Mammary epithelial cell (primary cell): ENCODE measurements at regions of chr5 and their contacts with region 1.

Region 1: GRCh38 chr5:121968910-121969607 is 7.3 kb downstream of the SRFBP1 start:
- DNase-seq: peak; percentile 98
- H3K4me3 ChIP-seq: peak overlapping the region in 1 of 3 experiments; percentile 25
- H3K27ac ChIP-seq: peak overlapping the region; percentile 87
- H3K4me1 ChIP-seq: peaks cover 29% of the 10 kb centered on the region
- H3K27me3 ChIP-seq: no peaks in the 10 kb centered on the region
- CTCF ChIP-seq: no peak

Region 2: GRCh38 chr5:122053181-122054109 is 84.4 kb after region 1 on chr5:
- CTCF ChIA-PET with region 1: no interaction called
- dilution Hi-C with region 1: loop called (anchors 5 kb)
- in situ Hi-C with region 1: no loop called
- intact Hi-C with region 1: no loop called
- DNase-seq: no peak
- H3K4me3 ChIP-seq: no peak overlapping the region
- H3K27ac ChIP-seq: no peak overlapping the region
- H3K4me1 ChIP-seq: no peaks in the 10 kb centered on the region
- H3K27me3 ChIP-seq: no peaks in the 10 kb centered on the region
- CTCF ChIP-seq: no peak

Region 3: DNA sequence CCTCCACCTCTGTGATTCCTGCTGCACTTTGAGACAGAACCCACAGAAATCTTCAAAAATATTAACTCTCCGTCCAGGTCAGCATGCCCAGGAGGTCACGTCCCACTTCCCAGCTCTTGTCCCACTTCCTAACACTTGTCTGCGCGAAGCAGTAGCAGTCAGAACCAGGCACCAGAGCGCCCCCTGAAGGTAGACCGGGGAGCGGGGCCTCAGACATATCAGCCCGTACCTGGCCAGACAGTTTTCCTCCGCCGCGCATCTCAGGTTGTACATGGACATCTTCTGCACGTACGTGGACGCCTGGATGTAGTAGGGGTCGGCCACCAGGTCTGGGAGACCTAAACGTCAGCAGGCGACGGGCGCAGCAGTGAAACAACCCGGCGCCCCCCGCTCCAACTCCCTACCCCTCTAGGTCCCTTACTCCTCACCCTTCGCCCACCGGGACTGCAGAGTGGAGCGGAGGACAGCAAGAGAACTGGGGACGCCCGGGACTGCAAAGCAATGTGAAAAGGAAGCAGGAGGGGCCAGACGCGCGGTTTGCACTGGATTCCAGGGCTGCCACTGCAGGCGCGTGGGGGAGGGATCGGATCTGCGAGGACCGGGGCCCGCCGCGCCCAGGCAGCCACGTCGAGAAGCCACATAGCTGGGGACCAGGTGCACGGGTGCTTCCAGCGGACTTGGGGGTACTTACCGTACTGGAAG is 107.8 kb after region 1 on chr5:
- CTCF ChIA-PET with region 1: interaction called, 8 read pairs
- dilution Hi-C with region 1: no loop called
- in situ Hi-C with region 1: loop called in 1 of 2 experiments (anchors 25 kb)
- intact Hi-C with region 1: loop called (anchors 1 kb)
- DNase-seq: peak; percentile 75
- H3K4me3 ChIP-seq: peak overlapping the region; percentile 41 to 73 (median 69)
- H3K27ac ChIP-seq: peak overlapping the region; percentile 53
- H3K4me1 ChIP-seq: peaks cover 30% of the 10 kb centered on the region
- H3K27me3 ChIP-seq: no peaks in the 10 kb centered on the region
- CTCF ChIP-seq: peak; percentile 84 to 95

Region 4: DNA sequence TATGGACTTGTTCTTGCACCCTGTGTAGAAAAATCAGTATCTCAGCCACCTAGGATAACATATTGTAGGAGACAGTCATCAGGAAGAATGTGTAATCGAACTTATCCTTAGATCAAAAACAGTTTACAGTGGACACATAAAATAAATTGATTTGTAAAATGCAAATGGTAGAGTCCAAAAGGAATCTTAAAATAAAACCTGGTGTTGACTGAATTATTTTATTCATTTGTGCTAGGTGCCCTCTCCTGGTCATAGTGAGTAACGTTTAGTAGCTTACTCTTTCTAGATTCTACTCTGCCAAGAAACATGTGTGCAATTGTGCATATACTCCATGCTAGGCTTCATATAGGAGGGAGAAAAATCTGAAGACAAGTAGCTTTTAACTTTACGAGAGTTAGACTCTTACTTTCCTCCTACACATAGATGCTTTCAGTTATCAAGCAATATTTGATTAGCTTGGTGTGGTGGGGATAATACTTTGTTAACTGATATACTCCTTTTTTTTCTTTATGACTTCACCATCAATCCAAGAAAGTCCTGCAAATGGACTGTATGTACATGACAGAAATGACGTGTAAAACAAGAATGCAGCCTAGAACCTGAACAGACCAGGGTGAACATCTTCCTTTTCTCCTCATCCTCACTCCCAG is 132.7 kb after region 1 on chr5:
- CTCF ChIA-PET with region 1: interaction called, 6 read pairs
- dilution Hi-C with region 1: no loop called
- in situ Hi-C with region 1: loop called in 1 of 2 experiments (anchors 25 kb)
- intact Hi-C with region 1: loop called (anchors 1 kb)
- DNase-seq: peak; percentile 35
- H3K4me3 ChIP-seq: no peak overlapping the region
- H3K27ac ChIP-seq: no peak overlapping the region
- H3K4me1 ChIP-seq: peaks cover 22% of the 10 kb centered on the region
- H3K27me3 ChIP-seq: no peaks in the 10 kb centered on the region
- CTCF ChIP-seq: peak; percentile 61 to 74

Region 5: GRCh38 chr5:122156724-122157325 is 187.8 kb after region 1 on chr5:
- CTCF ChIA-PET with region 1: interaction called, 4 read pairs
- dilution Hi-C with region 1: no loop called
- in situ Hi-C with region 1: loop called in 1 of 2 experiments (anchors 10 kb)
- intact Hi-C with region 1: loop called (anchors 1 kb)
- DNase-seq: peak; percentile 45
- H3K4me3 ChIP-seq: no peak overlapping the region
- H3K27ac ChIP-seq: no peak overlapping the region
- H3K4me1 ChIP-seq: peaks cover 3% of the 10 kb centered on the region
- H3K27me3 ChIP-seq: no peaks in the 10 kb centered on the region
- CTCF ChIP-seq: peak; percentile 43 to 59

Region 6: GRCh38 chr5:122182491-122182921 is 213.4 kb after region 1 on chr5:
- CTCF ChIA-PET with region 1: no interaction called
- dilution Hi-C with region 1: no loop called
- in situ Hi-C with region 1: no loop called
- intact Hi-C with region 1: loop called (anchors 5 kb)
- DNase-seq: peak; percentile 92
- H3K4me3 ChIP-seq: peak overlapping the region in 2 of 3 experiments; percentile 32 to 34
- H3K27ac ChIP-seq: peak overlapping the region; percentile 99
- H3K4me1 ChIP-seq: peaks cover 42% of the 10 kb centered on the region
- H3K27me3 ChIP-seq: no peaks in the 10 kb centered on the region
- CTCF ChIP-seq: no peak

Region 7: GRCh38 chr5:122415030-122415800 is 446.2 kb after region 1 on chr5:
- CTCF ChIA-PET with region 1: interaction called, 4 read pairs
- dilution Hi-C with region 1: no loop called
- in situ Hi-C with region 1: no loop called
- intact Hi-C with region 1: loop called (anchors 10 kb)
- DNase-seq: peak; percentile 41
- H3K4me3 ChIP-seq: no peak overlapping the region
- H3K27ac ChIP-seq: no peak overlapping the region
- H3K4me1 ChIP-seq: no peaks in the 10 kb centered on the region
- H3K27me3 ChIP-seq: peaks cover 1% of the 10 kb centered on the region
- CTCF ChIP-seq: peak; percentile 61 to 84